ENCODE measurements at regions of chr16 and their contacts with region 1.

Region 1: DNA sequence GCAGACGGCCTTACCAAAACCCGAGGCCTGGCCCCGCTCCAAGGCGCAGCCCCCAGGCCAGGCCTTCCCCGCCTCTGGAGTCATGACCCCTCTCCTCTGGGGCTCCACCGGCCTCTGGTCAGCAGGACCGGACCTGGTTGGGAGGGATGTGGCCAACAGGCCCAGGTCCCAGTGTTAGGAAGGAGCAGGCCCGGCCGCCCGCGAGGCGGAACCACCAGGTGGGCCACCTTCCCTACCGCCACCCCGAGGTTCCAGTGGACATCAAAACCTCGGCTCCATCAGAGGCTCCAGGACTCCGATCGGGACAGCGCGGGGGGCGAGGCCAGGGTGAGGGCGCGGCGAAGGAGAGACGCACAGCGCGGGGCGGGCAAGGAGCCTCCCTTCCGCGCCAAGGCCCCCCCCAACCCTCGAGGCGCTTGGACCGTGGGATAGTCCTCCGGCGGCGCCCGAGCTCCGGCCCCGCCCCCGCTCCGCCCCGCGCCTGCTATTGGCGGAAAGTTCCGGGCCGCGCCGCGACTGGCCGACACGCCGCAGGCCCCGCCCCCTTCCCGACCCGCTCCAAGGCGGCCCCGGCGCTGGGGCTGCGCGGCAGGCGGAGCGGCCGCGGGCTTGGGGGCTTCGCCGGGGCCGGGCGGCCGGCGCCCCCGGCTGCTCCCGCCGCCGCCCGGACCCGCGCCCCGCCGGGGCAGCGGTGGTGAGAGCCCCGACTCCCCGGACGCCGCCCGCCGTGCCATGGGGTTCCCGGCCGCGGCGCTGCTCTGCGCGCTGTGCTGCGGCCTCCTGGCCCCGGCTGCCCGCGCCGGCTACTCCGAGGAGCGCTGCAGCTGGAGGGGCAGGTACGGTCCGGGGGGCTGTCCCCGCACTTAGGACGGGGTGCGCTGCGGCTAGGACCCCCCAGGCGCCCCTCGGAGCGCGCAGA is at the start of gene METRN:
- DNase-seq: peak; percentile 96
- H3K4me3 ChIP-seq: peak within 1 kb of the TSS; percentile 53 to 75 (median 64)
- H3K27ac ChIP-seq: peak within 1 kb of the TSS; percentile 40 to 75 (median 56)
- H3K4me1 ChIP-seq: peaks cover 0 to 41% (median 31%) of the 10 kb centered on the region in 4 donors
- H3K27me3 ChIP-seq: peaks cover 9 to 30% (median 21%) of the 10 kb centered on the region in 3 donors
- CTCF ChIP-seq: no peak
- EP300 ChIP-seq: no peak
- POLR2A ChIP-seq: no peak
- total RNA-seq, gene METRN: 27.8 to 49.9 (median 32.2) TPM

Region 2: DNA sequence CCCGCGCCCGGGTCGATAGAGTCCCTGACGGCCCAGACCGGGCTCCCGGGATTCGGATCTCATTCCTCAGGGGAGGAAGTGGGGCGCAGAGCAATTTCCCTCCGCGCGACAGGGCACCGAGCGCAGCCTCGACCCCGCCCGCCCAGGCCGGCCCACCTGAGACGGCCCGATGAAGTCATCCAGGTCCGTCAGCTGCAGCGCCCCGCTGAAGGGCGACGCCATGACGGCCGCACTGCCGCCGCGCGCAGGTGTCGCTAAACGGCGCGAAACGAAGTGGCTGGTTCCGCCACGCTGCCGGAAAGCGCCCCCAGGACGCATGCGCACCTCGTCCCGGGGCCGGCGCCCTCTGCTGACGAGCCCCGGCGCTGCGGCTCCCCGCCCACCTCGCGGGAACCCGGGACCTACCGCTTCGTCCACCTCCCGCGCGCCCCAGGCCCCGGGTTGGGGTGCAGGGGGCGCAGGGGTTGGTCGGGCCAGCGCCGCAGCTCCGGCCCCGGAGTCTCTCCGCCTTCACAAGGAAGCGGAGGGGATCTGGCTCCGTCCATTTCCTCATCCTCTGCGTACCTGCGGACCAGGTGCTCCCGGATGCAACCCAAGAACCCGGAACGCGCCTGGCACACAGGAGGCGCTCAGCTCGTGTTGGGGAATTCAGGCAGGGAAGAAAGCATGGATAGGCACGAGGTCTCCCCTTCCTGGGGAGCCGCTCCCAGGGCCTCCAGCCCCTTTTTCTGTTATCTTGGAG is 26.1 kb after region 1 on chr16 and contains the start of gene CIAO3:
- intact Hi-C with region 1: loop called (anchors 1 kb)
- DNase-seq: peak; percentile 94
- H3K4me3 ChIP-seq: peak within 1 kb of the TSS; percentile 79 to 92 (median 88)
- H3K27ac ChIP-seq: peak within 1 kb of the TSS; percentile 69 to 75 (median 72)
- H3K4me1 ChIP-seq: peaks cover 0 to 18% (median 15%) of the 10 kb centered on the region in 4 donors
- H3K27me3 ChIP-seq: peaks cover 0 to 5% (median 0%) of the 10 kb centered on the region in 3 donors
- CTCF ChIP-seq: peak; percentile 62 to 97 (median 72)
- EP300 ChIP-seq: no peak
- POLR2A ChIP-seq: peak; percentile 16 to 58
- total RNA-seq, gene CIAO3: 18.9 to 28.5 (median 23.8) TPM

Region 3: DNA sequence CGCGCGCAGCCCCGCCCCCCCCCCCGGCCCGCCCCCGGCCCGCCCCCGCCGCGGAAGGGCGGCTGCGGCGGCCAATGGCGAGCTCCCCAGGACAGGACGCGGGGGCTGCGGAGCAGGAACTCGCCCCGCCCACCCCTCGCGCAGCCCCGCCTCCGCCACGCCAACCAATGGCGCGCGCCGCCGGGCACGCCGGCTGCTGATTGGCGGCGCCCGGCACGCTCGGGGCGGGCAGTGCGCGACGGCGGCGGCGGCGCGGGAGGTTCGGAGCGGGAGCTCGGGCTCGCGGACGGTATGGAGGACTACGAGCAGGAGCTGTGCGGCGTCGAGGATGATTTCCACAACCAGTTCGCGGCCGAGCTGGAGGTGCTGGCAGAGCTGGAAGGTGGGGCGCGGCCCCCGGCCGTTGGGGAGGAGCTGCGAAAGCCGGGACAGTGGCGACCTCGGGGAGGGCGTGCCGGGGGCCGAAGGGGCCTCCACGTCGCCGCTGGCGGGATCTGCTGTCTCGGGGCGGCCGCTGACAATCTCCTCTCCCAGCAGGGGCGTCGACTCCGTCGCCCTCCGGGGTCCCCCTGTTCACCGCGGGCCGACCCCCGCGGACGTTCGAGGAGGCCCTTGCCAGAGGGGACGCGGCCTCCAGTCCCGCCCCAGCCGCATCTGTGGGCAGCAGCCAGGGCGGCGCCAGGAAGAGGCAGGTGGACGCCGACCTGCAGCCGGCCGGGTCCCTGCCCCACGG is 73.7 kb after region 1 on chr16 and contains the start of gene CHTF18:
- intact Hi-C with region 1: loop called (anchors 2 kb)
- DNase-seq: peak; percentile 94
- H3K4me3 ChIP-seq: peak within 1 kb of the TSS; percentile 84 to 100 (median 94)
- H3K27ac ChIP-seq: peak within 1 kb of the TSS; percentile 62 to 83 (median 76)
- H3K4me1 ChIP-seq: peaks cover 0 to 25% (median 24%) of the 10 kb centered on the region in 4 donors
- H3K27me3 ChIP-seq: no peaks in the 10 kb centered on the region
- CTCF ChIP-seq: no peak
- EP300 ChIP-seq: no peak
- POLR2A ChIP-seq: no peak
- total RNA-seq, gene CHTF18: 2.8 to 7.7 (median 5.1) TPM

Region 4: DNA sequence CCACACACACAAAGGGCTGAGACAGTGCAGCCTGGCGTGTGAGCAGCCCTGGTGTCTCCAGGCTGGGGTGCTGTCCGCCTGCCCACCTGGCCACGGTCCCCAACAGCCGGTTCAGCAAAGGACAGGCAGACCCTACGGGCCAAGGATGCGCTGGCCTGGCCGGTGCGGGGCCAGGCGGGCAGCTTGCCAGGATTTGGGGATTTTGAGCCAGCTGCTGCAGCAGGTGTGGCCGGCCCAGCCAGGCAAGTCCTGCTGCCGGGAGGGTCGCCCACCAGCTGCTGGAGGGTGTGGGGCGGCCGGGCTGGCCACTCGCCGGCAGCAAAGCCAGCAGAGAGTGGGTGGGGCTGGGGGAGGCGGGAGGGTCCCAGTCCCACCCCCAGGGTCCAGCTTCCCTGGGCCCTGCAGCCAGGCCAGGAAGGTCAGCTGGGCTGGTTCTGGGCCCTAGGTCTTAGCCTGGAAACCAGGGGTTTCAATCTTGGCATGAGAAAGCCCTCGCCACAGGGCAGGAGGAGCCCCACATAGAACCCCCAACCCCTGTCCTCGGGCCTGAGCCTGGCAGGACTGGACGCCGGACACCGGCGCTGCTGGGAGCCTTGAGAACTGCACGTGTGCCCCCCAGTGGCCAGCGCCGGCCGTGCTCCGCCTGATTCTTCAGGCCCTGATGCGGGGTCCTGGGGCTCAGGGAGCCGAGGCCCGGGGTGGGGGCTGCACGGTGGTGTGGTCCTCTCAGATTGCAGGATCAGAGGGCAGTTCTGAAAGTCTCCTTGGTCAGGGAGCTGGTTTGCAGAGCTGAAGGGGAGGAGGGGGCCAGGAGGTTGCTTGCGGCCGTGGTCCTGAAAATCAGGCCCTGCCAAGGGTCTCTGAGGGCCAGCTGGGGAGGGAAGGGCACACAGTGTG is 340.1 kb after region 1 on chr16:
- intact Hi-C with region 1: loop called (anchors 5 kb)
- DNase-seq: no peak
- H3K4me3 ChIP-seq: no peak overlapping the region
- H3K27ac ChIP-seq: no peak overlapping the region
- H3K4me1 ChIP-seq: peaks cover 0 to 6% (median 3%) of the 10 kb centered on the region in 4 donors
- H3K27me3 ChIP-seq: peaks cover 20 to 54% (median 26%) of the 10 kb centered on the region in 3 donors
- CTCF ChIP-seq: peak; percentile 33 to 84 (median 79)
- EP300 ChIP-seq: no peak
- POLR2A ChIP-seq: no peak

Region 5: DNA sequence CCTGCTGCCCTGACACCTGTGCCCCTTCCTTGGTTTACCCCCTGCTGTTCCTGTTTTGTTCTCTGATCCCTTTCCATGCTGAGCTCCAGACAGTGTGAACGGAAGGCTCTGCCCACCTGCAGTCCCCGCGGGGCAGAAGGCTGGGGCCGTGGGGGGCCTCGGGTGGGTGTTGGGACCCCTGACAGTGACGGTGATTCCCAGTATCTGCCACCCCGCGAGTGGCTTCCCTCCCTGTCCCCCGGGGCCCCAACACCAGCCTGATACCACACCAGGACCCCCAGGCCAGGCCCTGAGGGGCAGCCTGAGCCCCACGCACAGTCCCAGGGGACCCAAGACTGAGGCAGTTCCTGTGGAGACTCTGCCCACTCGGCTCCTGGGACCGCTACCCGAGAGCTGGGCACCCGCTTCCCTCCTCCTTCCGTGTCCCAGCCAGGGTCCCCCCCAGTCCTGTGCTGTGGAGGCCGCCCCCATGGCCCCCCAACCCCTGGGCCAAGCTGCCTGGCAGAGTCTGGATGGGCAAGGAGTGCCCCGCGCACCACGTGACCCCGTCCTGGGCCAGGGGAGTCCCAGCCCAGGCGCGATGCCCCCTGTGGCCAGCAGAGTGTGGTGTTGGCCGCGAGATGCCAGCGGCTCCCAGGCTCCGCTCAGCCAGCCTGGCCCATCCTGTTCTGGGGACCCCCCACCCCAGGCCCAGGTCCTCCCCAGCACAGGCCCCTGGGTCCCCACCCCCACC is 391.2 kb after region 1 on chr16:
- intact Hi-C with region 1: loop called (anchors 2 kb)
- DNase-seq: peak; percentile 86
- H3K4me3 ChIP-seq: no peak overlapping the region
- H3K27ac ChIP-seq: no peak overlapping the region
- H3K4me1 ChIP-seq: peaks cover 0 to 23% (median 19%) of the 10 kb centered on the region in 4 donors
- H3K27me3 ChIP-seq: peaks cover 13 to 51% (median 26%) of the 10 kb centered on the region in 3 donors
- CTCF ChIP-seq: peak; percentile 58 to 92 (median 76)
- EP300 ChIP-seq: no peak
- POLR2A ChIP-seq: no peak